Ovary (tissue), 10 donors: ENCODE measurements at regions of chr4 and their contacts with region 1.

Region 1: GRCh38 chr4:106652095-106652494 is 283.5 kb upstream of the GIMD1 start:
- DNase-seq: no peak
- H3K4me3 ChIP-seq: no peak overlapping the region
- H3K27ac ChIP-seq: no peak overlapping the region
- H3K4me1 ChIP-seq: no peaks in the 10 kb centered on the region
- H3K27me3 ChIP-seq: no peaks in the 10 kb centered on the region
- CTCF ChIP-seq: no peak
- EP300 ChIP-seq: no peak
- POLR2A ChIP-seq: no peak

Region 2: GRCh38 chr4:106618956-106619355 is 33.1 kb before region 1 on chr4:
- intact Hi-C with region 1: no loop called
- DNase-seq: no peak
- H3K4me3 ChIP-seq: no peak overlapping the region
- H3K27ac ChIP-seq: no peak overlapping the region
- H3K4me1 ChIP-seq: no peaks in the 10 kb centered on the region
- H3K27me3 ChIP-seq: no peaks in the 10 kb centered on the region
- CTCF ChIP-seq: no peak
- EP300 ChIP-seq: no peak
- POLR2A ChIP-seq: no peak

Region 3: GRCh38 chr4:107115185-107115847 is 463.2 kb after region 1 on chr4:
- intact Hi-C with region 1: loop called in 1 of 4 experiments (anchors 5 kb)
- DNase-seq: no peak
- H3K4me3 ChIP-seq: no peak overlapping the region
- H3K27ac ChIP-seq: no peak overlapping the region
- H3K4me1 ChIP-seq: no peaks in the 10 kb centered on the region
- H3K27me3 ChIP-seq: no peaks in the 10 kb centered on the region
- CTCF ChIP-seq: no peak
- EP300 ChIP-seq: no peak
- POLR2A ChIP-seq: no peak